CD4-positive, alpha-beta T cell (primary cell): ENCODE measurements at regions of chr16 and their contacts with region 1.

Region 1: DNA sequence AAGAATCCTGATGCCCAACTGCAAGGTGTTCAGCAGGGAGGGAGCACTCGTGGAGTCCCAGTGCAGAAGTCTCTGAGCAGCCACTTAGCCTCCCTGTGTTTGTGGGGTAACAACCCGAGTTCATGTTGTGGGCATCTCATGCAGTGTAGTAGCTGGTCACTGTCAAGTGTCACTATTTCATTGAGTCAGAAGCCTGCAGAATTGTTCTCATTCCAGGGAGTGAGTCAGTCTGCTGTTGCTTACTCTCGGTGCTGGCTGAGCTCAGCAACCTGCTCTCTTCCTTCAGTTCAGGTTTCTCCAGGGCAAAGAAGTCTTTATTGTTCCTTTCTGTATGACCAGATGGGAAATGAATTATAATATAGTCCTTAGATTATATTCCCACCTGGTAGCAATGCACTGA is 24.1 kb downstream of the HMOX2 start:
- DNase-seq: no peak
- ATAC-seq: no peak
- H3K4me3 ChIP-seq: no peak overlapping the region
- H3K4me3 Mint-ChIP-seq: no peak overlapping the region
- H3K27ac ChIP-seq: peak overlapping the region in 1 of 2 donors; percentile 37
- H3K27ac Mint-ChIP-seq: peak overlapping the region; percentile 97
- H3K4me1 ChIP-seq: peaks cover 81% of the 10 kb centered on the region
- H3K4me1 Mint-ChIP-seq: peaks cover 89% of the 10 kb centered on the region
- H3K27me3 ChIP-seq: no peaks in the 10 kb centered on the region
- H3K27me3 Mint-ChIP-seq: no peaks in the 10 kb centered on the region
- CTCF ChIP-seq: no peak

Region 2: DNA sequence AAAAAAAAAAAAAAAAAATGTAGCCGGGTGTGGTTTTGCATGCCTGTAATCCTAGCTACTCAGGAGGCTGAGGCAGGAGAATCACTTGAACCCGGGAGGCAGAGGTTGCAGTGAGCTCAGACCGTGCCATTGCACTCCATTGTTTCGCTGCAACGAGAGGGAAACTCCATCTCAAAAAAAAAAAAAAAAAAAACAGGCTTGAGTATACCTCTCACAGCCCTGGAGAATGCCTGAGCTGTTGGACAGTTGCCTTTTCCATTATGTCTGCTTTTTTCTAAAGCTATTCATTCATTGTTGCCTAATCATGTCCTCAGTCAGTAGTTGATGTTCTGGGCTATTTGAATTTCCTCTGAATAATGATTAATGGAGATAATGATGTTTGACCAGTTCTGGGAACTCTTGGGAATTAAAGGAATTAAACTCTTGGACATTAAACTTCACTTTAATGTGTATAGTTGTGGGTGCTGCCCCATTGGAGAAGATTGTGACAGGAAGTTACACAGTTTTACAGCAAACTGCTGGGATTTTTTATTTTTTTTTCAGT is 12.2 kb before region 1 on chr16:
- CTCF ChIA-PET with region 1: interaction called, 5 read pairs
- POLR2A ChIA-PET with region 1: interaction called, 86 read pairs
- intact Hi-C with region 1: loop called (anchors 1 to 2 kb)
- DNase-seq: peak in 2 of 14 experiments; percentile 54 to 56
- ATAC-seq: peak; percentile 45
- H3K4me3 ChIP-seq: peak overlapping the region; percentile 7
- H3K4me3 Mint-ChIP-seq: peak overlapping the region; percentile 73
- H3K27ac ChIP-seq: peak overlapping the region; percentile 37 to 73
- H3K27ac Mint-ChIP-seq: peak overlapping the region; percentile 91
- H3K4me1 ChIP-seq: peaks cover 71% of the 10 kb centered on the region
- H3K4me1 Mint-ChIP-seq: peaks cover 60% of the 10 kb centered on the region
- H3K27me3 ChIP-seq: no peaks in the 10 kb centered on the region
- H3K27me3 Mint-ChIP-seq: no peaks in the 10 kb centered on the region
- CTCF ChIP-seq: no peak

Region 3: GRCh38 chr16:4574919-4575705 is 74.8 kb after region 1 on chr16:
- CTCF ChIA-PET with region 1: no interaction called
- POLR2A ChIA-PET with region 1: no interaction called
- intact Hi-C with region 1: no loop called
- DNase-seq: no peak
- ATAC-seq: no peak
- H3K4me3 ChIP-seq: no peak overlapping the region
- H3K4me3 Mint-ChIP-seq: no peak overlapping the region
- H3K27ac ChIP-seq: no peak overlapping the region
- H3K27ac Mint-ChIP-seq: no peak overlapping the region
- H3K4me1 ChIP-seq: peaks cover 7% of the 10 kb centered on the region
- H3K4me1 Mint-ChIP-seq: no peaks in the 10 kb centered on the region
- H3K27me3 ChIP-seq: no peaks in the 10 kb centered on the region
- H3K27me3 Mint-ChIP-seq: no peaks in the 10 kb centered on the region
- CTCF ChIP-seq: no peak

Region 4: DNA sequence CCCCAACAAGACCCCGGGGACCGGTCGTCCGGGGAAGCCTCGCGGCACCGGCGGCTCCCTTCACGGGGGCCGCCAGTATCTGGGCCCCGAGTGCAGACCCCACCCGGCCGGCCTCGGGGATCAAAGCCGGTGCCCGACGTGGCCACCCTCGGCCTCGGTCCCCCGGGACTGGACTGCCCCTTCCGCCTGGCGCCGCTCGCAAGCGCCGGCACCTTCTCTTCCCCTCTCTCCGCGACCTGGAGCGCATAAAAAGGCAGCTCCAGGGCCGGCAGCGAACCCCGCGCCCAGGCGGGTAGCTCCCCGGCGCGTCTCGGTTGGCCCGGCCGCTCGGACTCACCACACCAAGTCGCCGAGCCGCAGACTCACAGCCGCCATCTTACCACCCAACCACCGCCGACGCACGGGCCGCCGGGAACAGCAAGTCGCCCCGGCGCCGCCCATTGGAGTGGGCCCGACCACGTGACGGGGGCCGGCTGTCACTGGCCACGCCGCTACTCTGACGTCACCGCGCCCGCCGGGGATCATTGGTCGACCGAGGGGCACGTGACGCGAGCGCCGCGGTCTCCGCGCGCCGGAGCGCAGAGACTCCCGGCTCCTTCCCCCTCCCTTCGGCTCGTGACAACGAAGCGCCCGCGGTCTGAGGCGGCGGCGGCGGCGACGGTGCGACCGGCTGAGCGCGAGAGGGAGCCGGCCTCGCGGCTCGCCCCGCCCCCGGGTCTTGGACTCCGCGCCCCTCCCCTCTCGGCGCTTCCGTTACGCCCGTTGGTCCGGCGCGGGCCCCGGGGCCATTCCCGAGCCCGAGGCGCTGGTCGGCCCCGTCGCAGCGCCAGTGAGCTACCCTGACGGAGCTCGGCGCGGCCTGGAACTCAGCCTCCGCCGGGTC is 346.9 kb after region 1 on chr16 and contains the starts of genes GLYR1 and UBN1:
- CTCF ChIA-PET with region 1: no interaction called
- POLR2A ChIA-PET with region 1: no interaction called
- intact Hi-C with region 1: no loop called
- DNase-seq: peak; percentile 98 to 100 (median 99)
- ATAC-seq: peak; percentile 90
- H3K4me3 ChIP-seq: peak within 1 kb of the TSS; percentile 95
- H3K4me3 Mint-ChIP-seq: peak within 1 kb of the TSS; percentile 93
- H3K27ac ChIP-seq: peak within 1 kb of the TSS; percentile 75 to 93
- H3K27ac Mint-ChIP-seq: peak within 1 kb of the TSS; percentile 85
- H3K4me1 ChIP-seq: peaks cover 46% of the 10 kb centered on the region
- H3K4me1 Mint-ChIP-seq: peaks cover 57% of the 10 kb centered on the region
- H3K27me3 ChIP-seq: no peaks in the 10 kb centered on the region
- H3K27me3 Mint-ChIP-seq: no peaks in the 10 kb centered on the region
- CTCF ChIP-seq: no peak
- total RNA-seq, gene GLYR1: 71.7 to 77.2 TPM
- total RNA-seq, gene UBN1: 45.7 to 45.8 TPM